ENCODE measurements at regions of chr4 and their contacts with region 1.

Region 1: DNA sequence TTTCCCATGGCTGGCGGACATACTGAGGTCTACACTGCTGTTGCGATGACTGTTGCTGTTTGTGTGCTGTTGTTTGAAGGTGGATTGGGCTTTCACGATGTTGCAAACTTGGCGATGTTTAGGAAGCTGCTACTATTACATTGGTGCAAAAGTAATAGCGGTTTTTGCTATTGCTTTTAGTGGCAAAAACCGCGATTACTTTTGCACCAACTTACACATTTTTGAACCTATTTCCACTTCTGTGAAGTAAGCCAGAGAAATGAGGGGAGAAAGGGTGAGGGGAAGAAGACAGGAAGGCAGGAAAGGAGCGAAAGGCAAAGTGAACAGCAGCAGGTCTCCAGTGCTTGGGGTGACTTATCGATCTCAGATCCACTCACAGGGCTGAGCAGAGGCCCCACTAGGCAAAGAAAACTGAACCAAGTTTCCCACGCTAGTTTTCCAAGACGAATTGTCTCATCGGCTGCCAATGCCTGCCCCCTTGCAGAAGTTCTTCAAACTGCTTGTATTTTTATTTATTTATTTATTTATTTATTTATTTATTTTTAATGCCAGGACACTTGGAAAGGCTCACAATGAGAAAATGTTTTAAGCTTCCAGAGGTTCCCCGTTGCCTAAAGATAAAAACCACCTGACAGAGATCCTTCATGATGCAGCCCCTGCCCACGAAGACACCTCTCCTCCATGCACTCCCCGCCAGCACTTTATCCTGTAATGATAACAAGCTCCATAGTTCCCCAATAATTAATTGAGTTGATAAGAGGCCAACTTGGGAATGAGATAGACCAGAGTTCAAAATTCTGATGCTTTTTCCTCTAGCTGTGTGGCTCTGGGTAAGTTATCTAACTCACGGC is 43.3 kb downstream of the QDPR start:
- DNase-seq: no peak
- ATAC-seq: no peak
- H3K4me3 ChIP-seq: no peak overlapping the region
- H3K4me3 Mint-ChIP-seq: no peak overlapping the region
- H3K27ac ChIP-seq: no peak overlapping the region
- H3K27ac Mint-ChIP-seq: no peak overlapping the region
- H3K4me1 ChIP-seq: no peaks in the 10 kb centered on the region
- H3K4me1 Mint-ChIP-seq: peaks cover 0 to 3% (median 0%) of the 10 kb centered on the region in 7 donors
- H3K27me3 ChIP-seq: no peaks in the 10 kb centered on the region
- H3K27me3 Mint-ChIP-seq: no peaks in the 10 kb centered on the region

Region 2: GRCh38 chr4:16082426-16083240 is 1386.0 kb before region 1 on chr4:
- CTCF ChIA-PET with region 1: no interaction called
- POLR2A ChIA-PET with region 1: no interaction called
- intact Hi-C with region 1: no loop called
- DNase-seq: peak in 2 of 9 donors; percentile 7
- ATAC-seq: peak; percentile 51
- H3K4me3 ChIP-seq: peak overlapping the region; percentile 27
- H3K4me3 Mint-ChIP-seq: peak overlapping the region; percentile 53 to 89 (median 75)
- H3K27ac ChIP-seq: no peak overlapping the region
- H3K27ac Mint-ChIP-seq: no peak overlapping the region
- H3K4me1 ChIP-seq: peaks cover 3 to 12% of the 10 kb centered on the region in 2 donors
- H3K4me1 Mint-ChIP-seq: peaks cover 12 to 28% (median 19%) of the 10 kb centered on the region in 7 donors
- H3K27me3 ChIP-seq: peaks cover 0 to 6% of the 10 kb centered on the region in 2 donors
- H3K27me3 Mint-ChIP-seq: peaks cover 63 to 81% (median 69%) of the 10 kb centered on the region in 5 donors

Region 3: DNA sequence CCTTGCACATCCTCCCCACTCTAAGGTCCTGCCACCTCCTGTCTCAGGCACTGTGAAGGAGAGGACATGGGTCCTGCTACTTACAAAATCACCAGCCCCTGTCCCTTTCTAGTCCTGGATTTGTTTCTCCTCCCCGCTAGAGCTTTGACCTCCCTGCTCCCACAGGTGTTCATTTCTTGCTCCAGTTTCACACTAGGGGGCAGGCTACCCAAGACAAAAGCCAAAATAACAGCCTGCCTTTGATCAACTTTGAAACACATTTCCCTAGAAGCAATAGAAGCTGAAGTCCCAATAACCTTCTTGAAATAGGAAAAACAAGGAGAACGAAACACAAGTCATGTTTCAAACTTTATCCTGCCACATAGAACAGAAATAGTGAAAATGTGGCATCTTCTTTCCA is 121.2 kb before region 1 on chr4:
- CTCF ChIA-PET with region 1: interaction called, 3 read pairs
- POLR2A ChIA-PET with region 1: no interaction called
- intact Hi-C with region 1: loop called (anchors 1 to 5 kb)
- DNase-seq: peak in 6 of 9 donors; percentile 14 to 34 (median 20)
- ATAC-seq: peak; percentile 40
- H3K4me3 ChIP-seq: no peak overlapping the region
- H3K4me3 Mint-ChIP-seq: no peak overlapping the region
- H3K27ac ChIP-seq: no peak overlapping the region
- H3K27ac Mint-ChIP-seq: no peak overlapping the region
- H3K4me1 ChIP-seq: no peaks in the 10 kb centered on the region
- H3K4me1 Mint-ChIP-seq: no peaks in the 10 kb centered on the region
- H3K27me3 ChIP-seq: no peaks in the 10 kb centered on the region
- H3K27me3 Mint-ChIP-seq: peaks cover 0 to 6% (median 0%) of the 10 kb centered on the region in 5 donors

Measured in naive thymus-derived CD4-positive, alpha-beta T cell (primary cell).